ENCODE measurements at regions of chr7 and their contacts with region 1.

Region 1: GRCh38 chr7:98745722-98746318 is 124.0 kb downstream of the TMEM130 start:
- DNase-seq: peak; percentile 81
- ATAC-seq: peak; percentile 80
- H3K4me3 ChIP-seq: no peak overlapping the region
- H3K27ac ChIP-seq: no peak overlapping the region
- H3K4me1 ChIP-seq: no peaks in the 10 kb centered on the region
- H3K27me3 ChIP-seq: peaks cover 12% of the 10 kb centered on the region; the same call in 1 of the 2 replicates
- CTCF ChIP-seq: peak; percentile 83

Region 2: GRCh38 chr7:98294796-98295382 is 450.9 kb before region 1 on chr7:
- CTCF ChIA-PET with region 1: no interaction called
- POLR2A ChIA-PET with region 1: no interaction called
- intact Hi-C with region 1: loop called (anchors 10 kb)
- DNase-seq: peak; percentile 73
- ATAC-seq: peak; percentile 93
- H3K4me3 ChIP-seq: no peak overlapping the region
- H3K27ac ChIP-seq: no peak overlapping the region
- H3K4me1 ChIP-seq: no peaks in the 10 kb centered on the region
- H3K27me3 ChIP-seq: no peaks in the 10 kb centered on the region
- CTCF ChIP-seq: peak; percentile 90

Region 3: DNA sequence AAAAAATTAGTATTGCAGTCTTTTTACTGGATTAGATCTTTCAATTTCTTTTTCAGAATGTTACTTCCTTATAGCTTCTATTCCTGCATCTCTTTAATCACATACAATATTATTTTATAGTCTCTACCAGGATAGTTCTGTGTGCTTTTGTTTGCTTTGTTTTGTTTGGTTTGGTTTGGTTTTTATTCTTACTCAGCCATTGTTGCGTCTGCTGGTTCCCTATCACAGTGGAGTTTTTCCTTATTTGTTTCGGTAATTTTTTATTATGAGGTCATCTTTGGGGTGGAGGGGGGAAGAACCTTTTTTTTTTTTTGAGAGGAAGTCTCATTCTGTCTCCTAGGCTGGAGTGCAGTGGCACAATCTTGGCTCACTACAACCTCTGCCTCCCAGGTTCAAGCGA is 336.0 kb before region 1 on chr7:
- CTCF ChIA-PET with region 1: interaction called, 16 read pairs
- POLR2A ChIA-PET with region 1: no interaction called
- intact Hi-C with region 1: no loop called
- DNase-seq: peak; percentile 62
- ATAC-seq: peak; percentile 97
- H3K4me3 ChIP-seq: no peak overlapping the region
- H3K27ac ChIP-seq: peak overlapping the region; percentile 79
- H3K4me1 ChIP-seq: peaks cover 16% of the 10 kb centered on the region
- H3K27me3 ChIP-seq: no peaks in the 10 kb centered on the region
- CTCF ChIP-seq: no peak

Region 4: DNA sequence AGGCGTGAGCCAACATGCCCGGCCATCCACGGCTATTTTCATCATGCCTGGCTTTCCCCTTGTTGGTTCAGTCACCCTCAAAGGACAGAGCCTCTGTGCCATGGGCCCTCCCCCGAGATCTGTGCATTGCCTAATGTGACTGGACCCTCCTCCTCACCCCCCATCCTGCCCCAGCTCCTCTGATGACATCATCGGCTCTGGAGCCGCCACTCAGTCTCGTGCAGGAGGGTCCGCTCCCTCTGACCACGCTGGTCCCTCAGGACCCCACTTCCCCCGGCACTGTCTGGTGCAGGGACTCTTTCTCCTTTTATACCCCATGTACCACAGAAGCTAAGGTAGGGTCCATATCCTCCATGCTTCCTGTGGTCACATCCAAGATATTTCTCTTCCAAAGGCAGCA is 311.7 kb before region 1 on chr7:
- CTCF ChIA-PET with region 1: no interaction called
- POLR2A ChIA-PET with region 1: no interaction called
- intact Hi-C with region 1: loop called (anchors 1 kb)
- DNase-seq: no peak
- ATAC-seq: no peak
- H3K4me3 ChIP-seq: no peak overlapping the region
- H3K27ac ChIP-seq: no peak overlapping the region
- H3K4me1 ChIP-seq: no peaks in the 10 kb centered on the region
- H3K27me3 ChIP-seq: 0 out of 2 replicates have a peak, but pooled peaks cover 5% of the 10 kb centered on the region
- CTCF ChIP-seq: no peak

Region 5: DNA sequence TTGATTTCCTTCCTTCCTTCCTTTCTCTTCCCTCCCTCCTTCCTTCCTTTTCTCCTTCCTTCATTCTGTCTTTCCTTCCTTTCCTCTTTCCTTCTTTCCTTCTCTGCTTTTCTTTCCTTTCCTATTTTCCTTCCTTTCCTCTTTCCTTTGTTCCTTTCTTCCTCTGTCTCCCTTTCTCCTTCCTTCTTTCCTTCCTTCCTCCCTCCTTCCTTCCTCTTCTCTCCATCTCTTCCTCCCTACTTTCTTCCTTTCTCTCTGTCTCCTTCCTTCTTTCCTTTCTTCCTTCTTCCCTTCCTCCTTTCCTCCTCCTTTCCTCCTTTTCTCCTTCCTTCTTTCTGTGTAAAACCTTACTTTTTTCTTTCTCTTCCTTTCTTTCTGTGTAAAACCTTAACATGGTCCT is 161.0 kb before region 1 on chr7:
- CTCF ChIA-PET with region 1: no interaction called
- POLR2A ChIA-PET with region 1: no interaction called
- intact Hi-C with region 1: no loop called
- DNase-seq: no peak
- ATAC-seq: no peak
- H3K4me3 ChIP-seq: no peak overlapping the region
- H3K27ac ChIP-seq: no peak overlapping the region
- H3K4me1 ChIP-seq: no peaks in the 10 kb centered on the region
- H3K27me3 ChIP-seq: peaks cover 58% of the 10 kb centered on the region
- CTCF ChIP-seq: no peak